ENCODE measurements at regions of chr2 and their contacts with region 1.

Region 1: GRCh38 chr2:229445019-229445418 is 173.9 kb upstream of the PID1 start:
- DNase-seq: no peak
- ATAC-seq: peak; percentile 16; the same call in 1 of the 2 replicates
- H3K4me3 Mint-ChIP-seq: no peak overlapping the region
- H3K27ac Mint-ChIP-seq: no peak overlapping the region
- H3K4me1 Mint-ChIP-seq: no peaks in the 10 kb centered on the region
- H3K27me3 Mint-ChIP-seq: no peaks in the 10 kb centered on the region
- CTCF ChIP-seq: no peak

Region 2: GRCh38 chr2:229370509-229370908 is 74.5 kb before region 1 on chr2:
- CTCF ChIA-PET with region 1: no interaction called
- POLR2A ChIA-PET with region 1: no interaction called
- DNase-seq: no peak
- ATAC-seq: no peak
- H3K4me3 Mint-ChIP-seq: no peak overlapping the region
- H3K27ac Mint-ChIP-seq: no peak overlapping the region
- H3K4me1 Mint-ChIP-seq: no peaks in the 10 kb centered on the region
- H3K27me3 Mint-ChIP-seq: no peaks in the 10 kb centered on the region
- CTCF ChIP-seq: no peak

Region 3: GRCh38 chr2:229431327-229431954 is 13.6 kb before region 1 on chr2:
- CTCF ChIA-PET with region 1: interaction called, 11 read pairs
- POLR2A ChIA-PET with region 1: no interaction called
- DNase-seq: no peak
- ATAC-seq: peak; percentile 28; the same call in 1 of the 2 replicates
- H3K4me3 Mint-ChIP-seq: no peak overlapping the region
- H3K27ac Mint-ChIP-seq: no peak overlapping the region
- H3K4me1 Mint-ChIP-seq: peaks cover 3% of the 10 kb centered on the region; the same call in 1 of the 2 replicates
- H3K27me3 Mint-ChIP-seq: no peaks in the 10 kb centered on the region
- CTCF ChIP-seq: peak; percentile 43; the same call in 1 of the 2 replicates